ENCODE measurements at regions of chr5 and their contacts with region 1.

Region 1: GRCh38 chr5:96934708-96935558 is 947 bp upstream of the LNPEP start:
- DNase-seq: peak; percentile 97
- H3K4me3 ChIP-seq: peak overlapping the region; percentile 87
- H3K27ac ChIP-seq: peak overlapping the region; percentile 98
- H3K4me1 ChIP-seq: peaks cover 53% of the 10 kb centered on the region
- CTCF ChIP-seq: no peak

Region 2: DNA sequence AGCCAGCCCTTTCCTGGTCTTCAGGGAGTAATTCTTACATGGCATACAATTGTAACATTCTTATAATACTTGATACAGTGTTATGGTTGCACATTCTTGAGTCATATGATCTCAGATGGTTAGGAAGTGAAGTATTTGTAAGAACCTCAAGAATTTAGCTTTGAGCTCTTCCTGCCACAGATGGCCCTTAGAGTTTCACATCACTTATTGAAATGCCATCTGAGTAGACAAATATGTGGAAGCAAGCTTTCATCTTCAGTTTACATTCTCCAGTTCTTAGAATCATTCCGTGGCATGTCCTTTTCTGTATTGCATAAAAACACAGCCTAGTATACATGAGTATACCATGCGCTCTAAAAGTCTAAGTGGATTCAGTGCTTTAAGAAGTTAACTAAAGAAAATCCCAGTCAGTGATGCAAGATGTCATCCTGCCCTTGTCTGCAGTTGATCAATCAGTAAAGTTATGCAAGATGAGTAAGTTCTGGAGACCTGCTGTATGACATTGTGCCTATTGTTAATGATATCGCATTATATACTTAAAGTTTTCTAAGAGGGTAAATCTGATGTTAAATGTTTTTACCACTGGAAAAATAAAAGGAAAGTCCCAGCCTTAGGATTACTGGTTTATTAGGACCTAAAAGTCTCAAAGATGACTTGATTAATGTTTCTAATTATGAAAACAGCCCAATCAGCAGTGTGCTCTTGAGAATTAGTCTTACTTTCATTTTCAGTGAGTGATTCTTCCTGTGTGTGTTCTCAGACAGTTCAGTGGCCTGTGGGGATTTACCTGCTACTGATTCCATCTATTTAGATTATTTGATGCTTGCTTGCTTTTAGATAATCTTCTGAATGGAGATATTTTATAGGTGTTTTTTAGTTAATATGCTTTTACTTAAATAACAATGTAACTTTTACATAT is 1174.4 kb before region 1 on chr5:
- CTCF ChIA-PET with region 1: no interaction called
- POLR2A ChIA-PET with region 1: no interaction called
- intact Hi-C with region 1: loop called (anchors 2 kb)
- DNase-seq: peak; percentile 71
- H3K4me3 ChIP-seq: peak overlapping the region; percentile 62
- H3K27ac ChIP-seq: peak overlapping the region; percentile 72
- H3K4me1 ChIP-seq: peaks cover 32% of the 10 kb centered on the region
- CTCF ChIP-seq: no peak

Region 3: GRCh38 chr5:96807075-96807654 is 127.8 kb before region 1 on chr5:
- CTCF ChIA-PET with region 1: interaction called, 3 read pairs
- POLR2A ChIA-PET with region 1: interaction called, 8 read pairs
- intact Hi-C with region 1: loop called (anchors 1 kb)
- DNase-seq: peak; percentile 55
- H3K4me3 ChIP-seq: peak overlapping the region; percentile 84
- H3K27ac ChIP-seq: peak overlapping the region; percentile 75
- H3K4me1 ChIP-seq: peaks cover 46% of the 10 kb centered on the region
- CTCF ChIP-seq: no peak

Region 4: DNA sequence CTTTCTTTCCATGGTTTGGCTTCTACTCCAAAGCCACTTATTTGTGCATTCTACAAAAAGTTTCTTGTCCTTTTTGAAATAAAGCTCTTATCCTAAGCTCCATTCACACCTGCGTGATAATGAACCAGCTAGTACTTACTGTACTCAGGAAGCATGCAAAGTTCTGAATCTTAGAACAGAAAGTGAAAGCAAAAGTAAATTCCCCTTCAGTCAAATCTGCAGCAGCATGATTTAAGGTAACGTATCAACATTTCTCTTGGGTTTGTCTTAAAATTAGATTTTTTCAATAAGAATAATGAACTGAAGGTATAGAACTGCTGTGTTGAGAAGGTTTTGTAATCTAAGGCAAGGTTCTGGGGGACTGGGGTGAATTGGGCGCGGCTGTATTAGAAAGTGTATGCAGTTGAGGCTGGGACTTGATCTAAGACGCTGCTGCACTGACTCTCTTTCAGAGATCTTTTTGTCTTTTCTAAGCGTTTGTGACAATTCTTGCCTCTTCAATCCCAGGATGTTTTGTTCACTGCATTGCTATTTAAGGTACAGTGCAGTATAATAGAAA is 58.6 kb before region 1 on chr5 and contains the start of gene ERAP2:
- CTCF ChIA-PET with region 1: interaction called, 3 read pairs
- POLR2A ChIA-PET with region 1: interaction called, 19 read pairs
- intact Hi-C with region 1: loop called (anchors 1 kb)
- DNase-seq: peak; percentile 78
- H3K4me3 ChIP-seq: peak within 1 kb of the TSS; percentile 80
- H3K27ac ChIP-seq: peak within 1 kb of the TSS; percentile 64
- H3K4me1 ChIP-seq: peaks cover 69% of the 10 kb centered on the region
- CTCF ChIP-seq: no peak
- total RNA-seq, gene ERAP2: 29.3 and 35.6 TPM in 2 replicates

Region 5: GRCh38 chr5:96957254-96958049 is 22.5 kb after region 1 on chr5:
- CTCF ChIA-PET with region 1: interaction called, 3 read pairs
- POLR2A ChIA-PET with region 1: interaction called, 38 read pairs
- intact Hi-C with region 1: loop called (anchors 1 kb)
- DNase-seq: peak; percentile 33
- H3K4me3 ChIP-seq: peak overlapping the region; percentile 82
- H3K27ac ChIP-seq: peak overlapping the region; percentile 98
- H3K4me1 ChIP-seq: peaks cover 56% of the 10 kb centered on the region
- CTCF ChIP-seq: no peak

Region 6: GRCh38 chr5:97009212-97009898 is 74.4 kb after region 1 on chr5:
- CTCF ChIA-PET with region 1: no interaction called
- POLR2A ChIA-PET with region 1: interaction called, 3 read pairs
- intact Hi-C with region 1: loop called (anchors 2 kb)
- DNase-seq: peak; percentile 86
- H3K4me3 ChIP-seq: peak overlapping the region; percentile 48
- H3K27ac ChIP-seq: peak overlapping the region; percentile 89
- H3K4me1 ChIP-seq: peaks cover 37% of the 10 kb centered on the region
- CTCF ChIP-seq: no peak

Region 7: DNA sequence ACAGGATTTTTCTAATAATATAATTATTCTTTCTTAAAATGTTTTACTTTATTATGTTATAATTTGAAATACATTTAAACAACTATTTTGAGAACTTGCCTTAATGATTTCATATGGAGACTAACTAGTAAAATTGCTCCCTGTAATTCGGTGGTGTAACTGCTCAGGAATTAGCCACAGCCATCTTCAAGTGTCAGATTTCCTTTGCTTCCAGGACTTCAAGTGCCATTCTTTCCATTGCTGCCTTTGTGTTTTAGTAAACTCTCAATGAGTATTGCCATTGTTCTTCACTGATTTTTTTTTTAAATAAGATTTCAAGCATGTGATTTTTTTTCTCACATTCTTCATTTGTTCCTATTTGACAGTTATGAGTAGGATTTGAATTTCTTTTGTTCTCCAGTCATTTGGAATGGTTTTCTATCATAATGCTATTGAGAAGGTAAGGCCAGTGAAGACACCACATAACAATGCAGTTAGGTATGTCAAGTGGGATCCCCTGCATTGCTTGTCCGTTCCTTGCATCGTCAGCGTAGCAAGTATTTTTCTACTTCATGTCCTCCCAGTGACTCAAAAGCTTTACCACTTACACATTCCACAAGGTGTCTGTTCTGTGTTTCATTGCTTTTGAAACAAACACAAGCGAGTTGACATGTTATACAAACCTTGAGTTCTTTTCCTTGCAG is 84.6 kb after region 1 on chr5:
- CTCF ChIA-PET with region 1: no interaction called
- POLR2A ChIA-PET with region 1: no interaction called
- intact Hi-C with region 1: no loop called
- DNase-seq: no peak
- H3K4me3 ChIP-seq: no peak overlapping the region
- H3K27ac ChIP-seq: no peak overlapping the region
- H3K4me1 ChIP-seq: no peaks in the 10 kb centered on the region
- CTCF ChIP-seq: no peak

Region 8: GRCh38 chr5:97162045-97162444 is 227.1 kb after region 1 on chr5:
- CTCF ChIA-PET with region 1: no interaction called
- POLR2A ChIA-PET with region 1: no interaction called
- intact Hi-C with region 1: loop called (anchors 5 kb)
- DNase-seq: peak; percentile 74
- H3K4me3 ChIP-seq: no peak overlapping the region
- H3K27ac ChIP-seq: no peak overlapping the region
- H3K4me1 ChIP-seq: peaks cover under 1% of the 10 kb centered on the region
- CTCF ChIP-seq: peak; percentile 100

Measured in OCI-LY7 (cell line).